Caco-2 (cell line): ENCODE measurements at regions of chr1 and their contacts with region 1.

Region 1: GRCh38 chr1:6343506-6344405 is 49.8 kb downstream of the ACOT7 start:
- DNase-seq: peak in 1 of 2 experiments; percentile 67
- H3K4me3 ChIP-seq: no peak overlapping the region
- H3K4me3 Mint-ChIP-seq: no peak overlapping the region
- H3K27ac Mint-ChIP-seq: peak overlapping the region; percentile 39
- H3K4me1 ChIP-seq: no peaks in the 10 kb centered on the region
- H3K4me1 Mint-ChIP-seq: peaks cover 9% of the 10 kb centered on the region
- H3K27me3 ChIP-seq: no peaks in the 10 kb centered on the region
- H3K27me3 Mint-ChIP-seq: no peaks in the 10 kb centered on the region
- CTCF ChIP-seq: peak; percentile 58 to 59

Region 2: GRCh38 chr1:6378096-6378746 is 34.5 kb after region 1 on chr1:
- CTCF ChIA-PET with region 1: interaction called, 4 read pairs
- POLR2A ChIA-PET with region 1: no interaction called
- intact Hi-C with region 1: loop called (anchors 1 kb)
- DNase-seq: no peak
- H3K4me3 ChIP-seq: no peak overlapping the region
- H3K4me3 Mint-ChIP-seq: no peak overlapping the region
- H3K27ac Mint-ChIP-seq: no peak overlapping the region
- H3K4me1 ChIP-seq: no peaks in the 10 kb centered on the region
- H3K4me1 Mint-ChIP-seq: no peaks in the 10 kb centered on the region
- H3K27me3 ChIP-seq: no peaks in the 10 kb centered on the region
- H3K27me3 Mint-ChIP-seq: no peaks in the 10 kb centered on the region
- CTCF ChIP-seq: no peak

Region 3: GRCh38 chr1:6393400-6394187 is 49.8 kb after region 1 on chr1 and contains the start of gene ACOT7:
- CTCF ChIA-PET with region 1: interaction called, 8 read pairs
- POLR2A ChIA-PET with region 1: no interaction called
- intact Hi-C with region 1: loop called (anchors 1 kb)
- DNase-seq: peak; percentile 84 to 88
- H3K4me3 ChIP-seq: peak within 1 kb of the TSS; percentile 63
- H3K4me3 Mint-ChIP-seq: peak within 1 kb of the TSS; percentile 79
- H3K27ac Mint-ChIP-seq: peak within 1 kb of the TSS; percentile 92
- H3K4me1 ChIP-seq: 0 out of 2 replicates have a peak, but pooled peaks cover 3% of the 10 kb centered on the region
- H3K4me1 Mint-ChIP-seq: peaks cover 5% of the 10 kb centered on the region
- H3K27me3 ChIP-seq: no peaks in the 10 kb centered on the region
- H3K27me3 Mint-ChIP-seq: no peaks in the 10 kb centered on the region
- CTCF ChIP-seq: peak in 1 of 2 experiments; percentile 24
- total RNA-seq, gene ACOT7: 179 and 221 TPM in 2 replicates

Region 4: GRCh38 chr1:6401673-6402072 is 57.9 kb after region 1 on chr1:
- CTCF ChIA-PET with region 1: interaction called, 8 read pairs
- POLR2A ChIA-PET with region 1: no interaction called
- intact Hi-C with region 1: loop called (anchors 1 kb)
- DNase-seq: no peak
- H3K4me3 ChIP-seq: no peak overlapping the region
- H3K4me3 Mint-ChIP-seq: no peak overlapping the region
- H3K27ac Mint-ChIP-seq: no peak overlapping the region
- H3K4me1 ChIP-seq: no peaks in the 10 kb centered on the region
- H3K4me1 Mint-ChIP-seq: peaks cover 5% of the 10 kb centered on the region
- H3K27me3 ChIP-seq: no peaks in the 10 kb centered on the region
- H3K27me3 Mint-ChIP-seq: no peaks in the 10 kb centered on the region
- CTCF ChIP-seq: no peak

Region 5: GRCh38 chr1:6544831-6545230 is 201.1 kb after region 1 on chr1:
- CTCF ChIA-PET with region 1: no interaction called
- POLR2A ChIA-PET with region 1: no interaction called
- intact Hi-C with region 1: no loop called
- DNase-seq: no peak
- H3K4me3 ChIP-seq: no peak overlapping the region
- H3K4me3 Mint-ChIP-seq: no peak overlapping the region
- H3K27ac Mint-ChIP-seq: no peak overlapping the region
- H3K4me1 ChIP-seq: no peaks in the 10 kb centered on the region
- H3K4me1 Mint-ChIP-seq: no peaks in the 10 kb centered on the region
- H3K27me3 ChIP-seq: no peaks in the 10 kb centered on the region
- H3K27me3 Mint-ChIP-seq: no peaks in the 10 kb centered on the region
- CTCF ChIP-seq: no peak